AG04450 (cell line): ENCODE measurements at regions of chr4 and their contacts with region 1.

Region 1: DNA sequence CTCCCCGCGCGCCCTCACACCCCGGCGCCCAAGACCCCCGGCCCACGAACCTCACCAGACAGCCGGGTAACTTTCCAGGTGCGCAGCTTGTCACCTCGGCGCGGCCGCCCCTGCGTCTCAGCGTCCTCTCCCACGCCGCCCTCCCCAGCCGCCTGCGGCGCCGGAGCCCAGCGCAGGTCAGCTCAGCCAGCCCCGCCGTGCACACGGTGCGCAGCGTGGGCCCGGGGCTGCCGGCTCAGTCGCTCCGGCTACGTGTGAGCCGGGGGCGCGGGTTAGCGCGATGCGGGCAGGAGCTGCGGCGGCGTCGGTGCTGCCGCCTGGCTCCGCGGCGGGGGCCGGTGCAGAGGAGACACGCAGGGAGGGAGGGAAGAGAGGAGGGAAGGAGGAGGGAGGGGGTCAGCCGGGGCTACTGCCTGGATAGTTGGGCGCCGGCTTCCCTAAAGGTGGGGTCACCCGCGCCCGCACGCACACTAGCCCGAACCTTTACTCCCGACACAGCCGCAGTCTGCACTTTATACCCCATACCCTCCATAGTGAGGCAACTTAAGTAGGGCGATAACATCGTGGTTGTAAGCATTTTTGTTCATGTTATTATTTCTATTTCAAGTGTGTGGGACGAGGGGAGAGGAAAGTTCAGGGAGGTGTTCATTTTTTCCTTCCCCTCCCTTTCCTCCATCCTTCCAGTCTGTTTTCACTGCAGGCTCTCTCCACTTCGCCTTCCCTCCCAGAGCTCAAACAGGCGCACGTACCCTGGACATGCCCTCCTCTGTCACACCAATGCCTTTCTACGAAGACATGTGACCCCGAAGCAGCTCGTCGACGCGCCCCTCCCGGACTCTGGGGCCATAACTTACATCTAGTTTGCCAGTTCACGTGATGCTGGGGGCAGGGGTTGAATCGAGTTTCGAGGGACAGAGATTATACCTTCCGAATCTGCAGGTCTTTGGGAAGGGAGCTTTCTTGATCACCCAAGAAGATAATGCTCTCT is at the start of gene PRKG2:
- DNase-seq: no peak
- H3K4me3 ChIP-seq: peak within 1 kb of the TSS; percentile 68
- H3K27ac ChIP-seq: peak within 1 kb of the TSS; percentile 1
- H3K27me3 ChIP-seq: peaks cover 6% of the 10 kb centered on the region
- CTCF ChIP-seq: no peak
- polyA plus RNA-seq, gene PRKG2: 0.74 and 1.6 TPM in 2 replicates

Region 2: GRCh38 chr4:81164623-81165416 is 50.4 kb before region 1 on chr4:
- CTCF ChIA-PET with region 1: no interaction called
- POLR2A ChIA-PET with region 1: no interaction called
- DNase-seq: peak; percentile 8
- H3K4me3 ChIP-seq: no peak overlapping the region
- H3K27ac ChIP-seq: no peak overlapping the region
- H3K27me3 ChIP-seq: no peaks in the 10 kb centered on the region
- CTCF ChIP-seq: no peak

Region 3: GRCh38 chr4:81225252-81225651 is 10.1 kb after region 1 on chr4:
- CTCF ChIA-PET with region 1: no interaction called
- POLR2A ChIA-PET with region 1: no interaction called
- DNase-seq: no peak
- H3K4me3 ChIP-seq: no peak overlapping the region
- H3K27ac ChIP-seq: no peak overlapping the region
- H3K27me3 ChIP-seq: no peaks in the 10 kb centered on the region
- CTCF ChIP-seq: no peak

Region 4: GRCh38 chr4:81237791-81238190 is 22.6 kb after region 1 on chr4:
- CTCF ChIA-PET with region 1: interaction called, 12 read pairs
- POLR2A ChIA-PET with region 1: no interaction called
- DNase-seq: no peak
- H3K4me3 ChIP-seq: no peak overlapping the region
- H3K27ac ChIP-seq: no peak overlapping the region
- H3K27me3 ChIP-seq: no peaks in the 10 kb centered on the region
- CTCF ChIP-seq: no peak

Region 5: DNA sequence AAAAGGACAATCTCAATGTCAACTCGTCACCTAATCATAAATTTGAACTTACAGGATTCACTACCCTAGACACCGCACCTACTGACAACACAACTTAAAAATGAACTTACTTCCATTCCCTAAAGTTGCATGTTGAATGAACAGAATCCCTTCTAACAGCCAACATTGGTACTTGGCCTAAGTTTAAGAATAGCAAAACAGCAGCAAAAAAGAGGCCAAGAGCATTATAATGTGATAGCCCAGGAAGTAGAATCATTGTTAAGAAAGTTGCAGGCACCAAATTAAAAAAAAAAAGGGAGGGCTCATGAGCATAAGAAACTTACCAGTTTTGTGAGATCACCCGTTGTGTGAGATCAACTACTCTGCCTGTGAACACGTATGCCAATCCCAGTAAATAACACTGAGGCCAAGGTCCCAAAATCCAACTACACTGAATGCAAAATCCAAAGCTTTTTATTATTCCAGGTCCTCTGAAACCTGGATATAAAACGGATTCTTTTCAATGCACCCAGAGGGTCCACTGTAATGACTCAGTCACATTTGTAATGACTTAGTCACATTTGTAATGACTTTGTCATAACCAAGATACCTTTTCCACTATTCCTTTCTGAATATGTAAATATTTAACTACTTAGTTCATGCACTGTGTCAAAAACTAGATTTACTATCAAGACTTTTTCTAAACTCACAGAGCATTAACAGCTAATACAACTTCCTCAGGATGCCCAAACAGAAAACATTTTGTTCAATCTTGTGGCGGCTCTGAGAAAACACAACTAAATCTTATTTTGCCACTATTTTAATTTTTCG is 1208.3 kb after region 1 on chr4:
- CTCF ChIA-PET with region 1: no interaction called
- POLR2A ChIA-PET with region 1: no interaction called
- DNase-seq: no peak
- H3K4me3 ChIP-seq: no peak overlapping the region
- H3K27ac ChIP-seq: no peak overlapping the region
- H3K27me3 ChIP-seq: no peaks in the 10 kb centered on the region
- CTCF ChIP-seq: no peak